ENCODE measurements at regions of chr15 and their contacts with region 1.

Region 1: GRCh38 chr15:90071208-90071807 is 31.0 kb downstream of the IDH2 start:
- DNase-seq: peak; percentile 82 to 88 (median 87)
- H3K4me3 ChIP-seq: no peak overlapping the region
- H3K4me3 Mint-ChIP-seq: no peak overlapping the region
- H3K27ac ChIP-seq: peak overlapping the region in 1 of 2 donors; percentile 71
- H3K27ac Mint-ChIP-seq: peak overlapping the region; percentile 60 to 88 (median 81)
- H3K4me1 ChIP-seq: peaks cover 29 to 44% of the 10 kb centered on the region in 2 donors
- H3K4me1 Mint-ChIP-seq: peaks cover 29% of the 10 kb centered on the region
- H3K27me3 ChIP-seq: no peaks in the 10 kb centered on the region
- H3K27me3 Mint-ChIP-seq: peaks cover 0 to 2% (median 0%) of the 10 kb centered on the region in 3 donors
- CTCF ChIP-seq: peak; percentile 85

Region 2: GRCh38 chr15:89750560-89751542 is 320.5 kb before region 1 on chr15 and contains the start of gene MESP1:
- intact Hi-C with region 1: loop called in 1 of 2 experiments (anchors 5 kb)
- DNase-seq: peak; percentile 92 to 95 (median 92)
- H3K4me3 ChIP-seq: peak within 1 kb of the TSS; percentile 35 to 75 (median 40)
- H3K4me3 Mint-ChIP-seq: peak within 1 kb of the TSS; percentile 74 to 89
- H3K27ac ChIP-seq: no peak within 1 kb of the TSS
- H3K27ac Mint-ChIP-seq: peak within 1 kb of the TSS in 1 of 7 donors; percentile 78
- H3K4me1 ChIP-seq: peaks cover 12 to 22% of the 10 kb centered on the region in 2 donors
- H3K4me1 Mint-ChIP-seq: peaks cover 9% of the 10 kb centered on the region
- H3K27me3 ChIP-seq: peaks cover 0 to 17% of the 10 kb centered on the region in 2 donors
- H3K27me3 Mint-ChIP-seq: peaks cover 18 to 26% (median 21%) of the 10 kb centered on the region in 3 donors
- CTCF ChIP-seq: peak; percentile 94
- polyA plus RNA-seq, gene MESP1: 0.04 to 1.2 (median 0.06) TPM

Region 3: DNA sequence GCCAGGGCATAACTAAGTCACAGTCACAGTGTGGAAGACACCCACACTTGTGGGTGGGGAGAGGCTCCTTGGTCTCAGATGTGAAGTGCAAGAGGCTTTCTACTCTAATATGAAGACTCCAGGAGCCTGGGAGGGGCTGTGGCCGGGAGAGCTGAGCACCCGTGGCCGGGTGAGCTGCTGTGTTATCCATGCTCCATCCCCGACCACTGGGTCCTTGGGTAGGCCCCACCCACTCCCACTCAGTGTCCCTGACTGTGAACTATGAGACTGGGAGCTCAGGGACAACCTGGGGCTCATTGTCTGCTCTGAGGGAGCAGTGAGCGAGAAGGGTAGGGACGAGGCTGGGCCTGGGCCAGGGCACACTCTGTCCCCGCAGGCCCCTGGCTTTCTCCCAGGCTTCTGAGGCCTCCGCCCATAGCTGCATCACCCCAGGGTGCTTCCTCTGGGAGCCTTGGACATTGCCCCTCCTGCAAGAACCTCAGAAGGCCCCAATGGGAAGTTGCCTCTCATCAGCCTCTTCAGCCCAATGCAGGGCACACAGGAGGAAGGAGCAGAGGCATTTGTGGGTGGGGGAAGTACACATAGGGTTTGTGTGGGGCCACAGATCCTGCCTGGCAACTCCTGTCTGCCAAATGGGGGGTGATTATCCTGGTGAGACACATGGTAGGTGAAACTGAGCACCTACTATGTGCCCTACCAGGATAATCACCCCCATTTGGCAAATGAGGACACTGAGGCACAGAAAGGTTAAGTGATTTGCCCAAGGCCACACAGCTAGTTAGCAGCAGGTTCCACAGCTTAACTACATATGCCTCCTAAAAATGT is 259.1 kb before region 1 on chr15:
- intact Hi-C with region 1: loop called in 1 of 2 experiments (anchors 5 kb)
- DNase-seq: peak; percentile 75 to 83 (median 79)
- H3K4me3 ChIP-seq: peak overlapping the region in 2 of 3 experiments; percentile 3 to 98
- H3K4me3 Mint-ChIP-seq: peak overlapping the region; percentile 91 to 93
- H3K27ac ChIP-seq: peak overlapping the region; percentile 41 to 98
- H3K27ac Mint-ChIP-seq: peak overlapping the region; percentile 75 to 96 (median 86)
- H3K4me1 ChIP-seq: peaks cover 31 to 38% of the 10 kb centered on the region in 2 donors
- H3K4me1 Mint-ChIP-seq: peaks cover 44% of the 10 kb centered on the region
- H3K27me3 ChIP-seq: no peaks in the 10 kb centered on the region
- H3K27me3 Mint-ChIP-seq: peaks cover 2 to 24% (median 13%) of the 10 kb centered on the region in 3 donors
- CTCF ChIP-seq: no peak

Region 4: GRCh38 chr15:89893696-89894455 is 177.4 kb before region 1 on chr15 and contains the start of gene AP3S2:
- intact Hi-C with region 1: loop called in 1 of 2 experiments (anchors 5 kb)
- DNase-seq: peak; percentile 90 to 94 (median 92)
- H3K4me3 ChIP-seq: peak within 1 kb of the TSS; percentile 70 to 97 (median 75)
- H3K4me3 Mint-ChIP-seq: peak within 1 kb of the TSS; percentile 95 to 98
- H3K27ac ChIP-seq: peak within 1 kb of the TSS; percentile 94 to 99
- H3K27ac Mint-ChIP-seq: peak within 1 kb of the TSS; percentile 98 to 100 (median 99)
- H3K4me1 ChIP-seq: peaks cover 35 to 57% of the 10 kb centered on the region in 2 donors
- H3K4me1 Mint-ChIP-seq: peaks cover 48% of the 10 kb centered on the region
- H3K27me3 ChIP-seq: no peaks in the 10 kb centered on the region
- H3K27me3 Mint-ChIP-seq: peaks cover 0 to 3% (median 1%) of the 10 kb centered on the region in 3 donors
- CTCF ChIP-seq: no peak
- polyA plus RNA-seq, gene AP3S2: 30.8 to 41.2 (median 32.4) TPM

Region 5: DNA sequence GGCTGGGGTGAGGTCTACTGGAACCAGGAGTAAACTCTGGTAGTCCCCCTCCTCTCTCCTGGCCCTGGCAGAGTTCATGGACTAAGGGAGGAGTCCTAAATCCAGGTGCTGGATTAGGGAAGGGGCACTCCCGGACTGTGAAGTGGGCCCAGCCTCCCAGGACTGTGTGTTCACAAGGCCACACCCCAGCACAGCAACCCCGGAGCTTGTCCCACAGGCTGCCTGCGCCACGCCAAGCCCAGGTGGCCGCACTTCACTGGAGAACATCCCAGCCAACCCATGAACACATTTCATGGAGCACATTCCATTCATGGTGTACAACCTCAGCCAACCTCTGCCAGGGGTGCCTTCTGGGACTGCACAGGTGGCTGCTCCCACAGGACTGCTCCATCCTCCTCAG is 166.8 kb before region 1 on chr15:
- intact Hi-C with region 1: loop called (anchors 5 kb)
- DNase-seq: no peak
- H3K4me3 ChIP-seq: no peak overlapping the region
- H3K4me3 Mint-ChIP-seq: no peak overlapping the region
- H3K27ac ChIP-seq: no peak overlapping the region
- H3K27ac Mint-ChIP-seq: no peak overlapping the region
- H3K4me1 ChIP-seq: peaks cover 6 to 24% of the 10 kb centered on the region in 2 donors
- H3K4me1 Mint-ChIP-seq: peaks cover 24% of the 10 kb centered on the region
- H3K27me3 ChIP-seq: no peaks in the 10 kb centered on the region
- H3K27me3 Mint-ChIP-seq: peaks cover 0 to 4% (median 3%) of the 10 kb centered on the region in 3 donors
- CTCF ChIP-seq: no peak

Region 6: GRCh38 chr15:89958074-89958805 is 113.1 kb before region 1 on chr15:
- intact Hi-C with region 1: no loop called
- DNase-seq: no peak
- H3K4me3 ChIP-seq: no peak overlapping the region
- H3K4me3 Mint-ChIP-seq: no peak overlapping the region
- H3K27ac ChIP-seq: no peak overlapping the region
- H3K27ac Mint-ChIP-seq: peak overlapping the region in 1 of 7 donors; percentile 40
- H3K4me1 ChIP-seq: peaks cover 10 to 16% of the 10 kb centered on the region in 2 donors
- H3K4me1 Mint-ChIP-seq: peaks cover 16% of the 10 kb centered on the region
- H3K27me3 ChIP-seq: no peaks in the 10 kb centered on the region
- H3K27me3 Mint-ChIP-seq: peaks cover 0 to 5% (median 1%) of the 10 kb centered on the region in 3 donors
- CTCF ChIP-seq: no peak

Region 7: GRCh38 chr15:90037961-90038631 is 33.2 kb before region 1 on chr15:
- intact Hi-C with region 1: loop called in 1 of 2 experiments (anchors 5 kb)
- DNase-seq: peak; percentile 64 to 75 (median 73)
- H3K4me3 ChIP-seq: peak overlapping the region in 1 of 3 experiments; percentile 39
- H3K4me3 Mint-ChIP-seq: no peak overlapping the region
- H3K27ac ChIP-seq: peak overlapping the region; percentile 91 to 97
- H3K27ac Mint-ChIP-seq: peak overlapping the region; percentile 93 to 99 (median 98)
- H3K4me1 ChIP-seq: peaks cover 80 to 89% of the 10 kb centered on the region in 2 donors
- H3K4me1 Mint-ChIP-seq: peaks cover 87% of the 10 kb centered on the region
- H3K27me3 ChIP-seq: no peaks in the 10 kb centered on the region
- H3K27me3 Mint-ChIP-seq: peaks cover 0 to 2% (median 2%) of the 10 kb centered on the region in 3 donors
- CTCF ChIP-seq: no peak

Measured in CD14-positive monocyte (primary cell).